ENCODE measurements at regions of chr5 and their contacts with region 1.

Region 1: GRCh38 chr5:84069608-84070179 is 315.0 kb downstream of the EDIL3 start:
- DNase-seq: no peak
- ATAC-seq: no peak
- H3K4me3 ChIP-seq: no peak overlapping the region
- H3K27ac ChIP-seq: no peak overlapping the region
- H3K4me1 ChIP-seq: no peaks in the 10 kb centered on the region
- H3K27me3 ChIP-seq: no peaks in the 10 kb centered on the region
- CTCF ChIP-seq: no peak

Region 2: GRCh38 chr5:84028093-84028492 is 41.6 kb before region 1 on chr5:
- CTCF ChIA-PET with region 1: no interaction called
- POLR2A ChIA-PET with region 1: no interaction called
- in situ Hi-C with region 1: no loop called
- intact Hi-C with region 1: no loop called
- DNase-seq: no peak
- ATAC-seq: no peak
- H3K4me3 ChIP-seq: no peak overlapping the region
- H3K27ac ChIP-seq: no peak overlapping the region
- H3K4me1 ChIP-seq: no peaks in the 10 kb centered on the region
- H3K27me3 ChIP-seq: no peaks in the 10 kb centered on the region
- CTCF ChIP-seq: no peak

Region 3: DNA sequence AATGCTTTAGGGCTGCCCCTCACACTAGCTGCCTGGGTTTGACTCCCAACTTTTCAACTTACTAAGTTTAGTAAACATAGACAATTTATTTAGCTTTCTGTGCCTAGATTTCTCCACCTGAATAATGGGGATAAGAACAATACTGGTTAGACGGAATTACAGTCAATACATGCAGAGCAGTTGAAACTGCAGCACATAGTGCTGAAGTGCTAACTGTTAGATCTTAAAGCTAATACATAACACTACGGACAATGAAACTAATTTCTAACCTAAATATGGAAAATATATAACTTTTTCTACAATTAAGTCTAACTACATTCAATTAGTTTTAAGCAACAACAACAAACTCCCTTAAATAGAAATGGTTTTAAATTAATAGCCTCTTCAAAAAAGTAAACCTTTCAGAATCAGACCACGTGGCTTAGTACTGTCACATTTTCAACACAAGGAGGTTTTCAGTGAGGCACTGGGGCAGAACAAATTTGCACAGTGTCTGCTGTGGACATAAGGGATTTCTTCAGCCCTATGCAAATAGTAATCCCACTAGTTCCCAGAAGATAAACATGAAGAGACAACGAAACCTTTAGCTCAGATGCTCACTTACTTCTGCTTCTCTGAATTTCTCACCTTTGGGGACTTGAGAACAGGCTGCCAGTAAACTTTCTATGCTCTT is 21.6 kb after region 1 on chr5:
- CTCF ChIA-PET with region 1: no interaction called
- POLR2A ChIA-PET with region 1: no interaction called
- in situ Hi-C with region 1: no loop called
- intact Hi-C with region 1: no loop called
- DNase-seq: no peak
- ATAC-seq: no peak
- H3K4me3 ChIP-seq: no peak overlapping the region
- H3K27ac ChIP-seq: no peak overlapping the region
- H3K4me1 ChIP-seq: no peaks in the 10 kb centered on the region
- H3K27me3 ChIP-seq: no peaks in the 10 kb centered on the region
- CTCF ChIP-seq: no peak

Region 4: GRCh38 chr5:84131372-84131771 is 61.7 kb after region 1 on chr5:
- CTCF ChIA-PET with region 1: no interaction called
- POLR2A ChIA-PET with region 1: interaction called, 13 read pairs
- in situ Hi-C with region 1: no loop called
- intact Hi-C with region 1: no loop called
- DNase-seq: no peak
- ATAC-seq: peak; percentile 38; the same call in 1 of the 2 replicates
- H3K4me3 ChIP-seq: no peak overlapping the region
- H3K27ac ChIP-seq: no peak overlapping the region
- H3K4me1 ChIP-seq: no peaks in the 10 kb centered on the region; the same call in 1 of the 2 replicates
- H3K27me3 ChIP-seq: no peaks in the 10 kb centered on the region
- CTCF ChIP-seq: no peak

Region 5: DNA sequence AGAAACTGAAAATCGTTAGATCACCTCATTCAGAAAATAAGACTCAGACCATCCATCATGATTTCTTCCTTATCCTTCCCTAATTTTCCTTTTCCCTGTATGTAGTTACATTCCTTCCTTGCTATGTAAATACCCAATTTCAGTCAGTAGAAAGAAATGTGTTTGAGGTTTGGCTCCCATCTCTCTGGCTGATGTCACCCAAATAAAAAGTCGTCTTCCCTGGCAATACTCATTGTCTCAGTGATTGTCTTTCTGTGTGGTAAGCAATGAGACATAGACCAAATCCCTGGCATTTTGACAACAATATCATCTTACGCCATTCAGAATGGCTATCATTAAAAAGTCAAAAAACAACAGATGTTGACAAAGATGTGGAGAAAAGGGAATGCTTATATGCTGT is 618.9 kb after region 1 on chr5:
- CTCF ChIA-PET with region 1: no interaction called
- POLR2A ChIA-PET with region 1: no interaction called
- in situ Hi-C with region 1: no loop called
- intact Hi-C with region 1: no loop called
- DNase-seq: no peak
- ATAC-seq: no peak
- H3K4me3 ChIP-seq: no peak overlapping the region
- H3K27ac ChIP-seq: no peak overlapping the region
- H3K4me1 ChIP-seq: no peaks in the 10 kb centered on the region
- H3K27me3 ChIP-seq: no peaks in the 10 kb centered on the region
- CTCF ChIP-seq: no peak